AG04449 (cell line): ENCODE measurements at regions of chr15 and their contacts with region 1.

Region 1: DNA sequence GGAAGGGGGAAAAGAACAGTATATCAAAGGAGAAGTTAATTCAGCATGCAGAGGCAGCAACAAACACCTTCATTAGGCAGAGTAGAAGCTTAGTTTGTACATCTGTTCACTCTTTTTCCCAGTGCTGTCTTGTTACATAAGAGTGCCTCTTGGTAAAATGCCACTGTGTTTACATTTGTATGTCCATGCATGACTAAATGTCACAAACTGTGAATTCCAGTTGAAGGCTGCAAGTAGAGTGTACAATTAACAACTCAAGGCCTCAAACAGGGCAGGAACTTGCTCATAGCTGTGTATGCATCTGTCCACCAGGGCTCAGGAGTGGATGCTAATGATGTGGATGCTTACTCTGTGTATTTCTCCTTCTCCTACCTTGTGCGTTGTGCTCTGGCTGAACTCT is 214.2 kb upstream of the TPM1 start:
- DNase-seq: no peak
- H3K4me3 ChIP-seq: no peak overlapping the region
- CTCF ChIP-seq: no peak

Region 2: GRCh38 chr15:62847900-62848489 is 19.6 kb after region 1 on chr15:
- CTCF ChIA-PET with region 1: interaction called, 16 read pairs
- POLR2A ChIA-PET with region 1: no interaction called
- DNase-seq: no peak
- H3K4me3 ChIP-seq: no peak overlapping the region
- CTCF ChIP-seq: peak; percentile 45